Heart left ventricle (tissue), 16 donors: ENCODE measurements at regions of chr15 and their contacts with region 1.

Region 1: DNA sequence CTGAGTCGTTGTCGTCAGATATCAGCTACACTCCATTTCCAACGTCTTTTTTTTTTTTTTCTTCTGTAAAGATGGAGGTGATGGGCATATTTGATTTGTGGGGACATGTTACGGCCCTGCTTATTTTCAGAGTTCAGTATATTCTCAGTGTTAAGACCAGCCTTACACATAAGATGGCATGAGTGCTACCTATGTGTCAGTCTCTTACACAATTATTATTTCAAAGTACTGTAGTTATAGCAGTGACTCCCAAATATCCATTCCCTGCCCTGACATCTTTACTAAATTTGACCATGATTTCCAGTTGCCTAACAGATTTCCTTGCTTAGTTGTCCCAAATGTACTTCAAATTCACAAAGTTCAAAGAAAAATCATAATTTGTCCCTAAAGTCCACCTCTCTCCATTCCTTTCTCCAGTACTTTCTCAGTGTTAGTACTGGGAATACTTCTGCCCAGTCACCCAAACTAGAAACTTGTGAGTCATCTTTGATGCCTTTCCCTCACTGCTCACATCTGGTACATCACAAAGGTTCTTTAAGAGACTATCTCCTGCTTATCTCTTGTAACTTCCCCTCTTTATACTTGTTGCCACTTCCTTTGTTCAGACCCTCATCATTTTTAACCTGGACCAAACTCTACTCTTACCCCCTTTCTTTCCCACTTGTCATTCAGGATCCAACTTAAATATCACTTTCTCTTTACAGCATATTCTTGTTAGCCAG is 67.0 kb downstream of the ZNF609 start:
- DNase-seq: no peak
- ATAC-seq: peak in 1 of 4 donors; percentile 53
- H3K4me3 ChIP-seq: no peak overlapping the region
- H3K27ac ChIP-seq: no peak overlapping the region
- H3K4me1 ChIP-seq: peaks cover 0 to 17% (median 4%) of the 10 kb centered on the region in 12 donors
- H3K27me3 ChIP-seq: no peaks in the 10 kb centered on the region
- CTCF ChIP-seq: no peak
- POLR2A ChIP-seq: no peak

Region 2: DNA sequence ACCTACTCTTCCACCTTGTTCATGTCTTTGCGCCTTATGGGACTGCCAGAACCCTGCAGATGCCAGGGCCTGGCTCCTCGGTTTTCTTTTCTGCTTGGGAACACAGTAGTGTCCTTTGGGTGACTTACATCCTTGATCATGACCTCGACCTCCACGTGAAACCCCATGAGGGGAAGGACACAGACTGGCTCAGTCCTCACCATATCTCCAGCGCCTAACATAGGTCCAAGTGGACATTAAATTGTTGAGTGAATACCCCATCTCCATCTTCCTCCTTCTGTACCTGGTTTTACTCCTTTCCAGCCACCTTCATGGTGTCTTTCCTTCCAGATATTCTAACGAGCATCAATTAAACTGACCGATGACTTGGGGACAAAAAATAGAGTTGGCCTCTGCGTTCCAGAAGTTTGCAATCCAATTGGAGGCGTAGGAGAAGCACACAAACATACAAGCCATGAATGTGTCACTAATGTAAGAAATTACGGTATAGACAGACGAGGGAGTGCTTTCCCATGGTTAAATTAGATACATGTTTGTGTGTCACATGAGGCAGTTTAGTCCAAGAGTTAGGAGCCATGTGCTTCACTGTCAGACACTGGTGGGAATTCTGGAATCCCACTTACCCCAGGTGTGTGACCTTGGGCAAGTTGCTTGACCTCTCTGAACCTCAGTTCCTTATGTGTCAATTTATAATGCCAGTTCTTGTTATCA is 692.8 kb before region 1 on chr15:
- intact Hi-C with region 1: no loop called
- DNase-seq: no peak
- ATAC-seq: peak in 3 of 4 donors; percentile 8 to 27 (median 21)
- H3K4me3 ChIP-seq: peak overlapping the region; percentile 48 to 95 (median 84)
- H3K27ac ChIP-seq: peak overlapping the region; percentile 88 to 98 (median 93)
- H3K4me1 ChIP-seq: peaks cover 0 to 39% (median 28%) of the 10 kb centered on the region in 12 donors
- H3K27me3 ChIP-seq: no peaks in the 10 kb centered on the region
- CTCF ChIP-seq: no peak
- POLR2A ChIP-seq: no peak

Region 3: DNA sequence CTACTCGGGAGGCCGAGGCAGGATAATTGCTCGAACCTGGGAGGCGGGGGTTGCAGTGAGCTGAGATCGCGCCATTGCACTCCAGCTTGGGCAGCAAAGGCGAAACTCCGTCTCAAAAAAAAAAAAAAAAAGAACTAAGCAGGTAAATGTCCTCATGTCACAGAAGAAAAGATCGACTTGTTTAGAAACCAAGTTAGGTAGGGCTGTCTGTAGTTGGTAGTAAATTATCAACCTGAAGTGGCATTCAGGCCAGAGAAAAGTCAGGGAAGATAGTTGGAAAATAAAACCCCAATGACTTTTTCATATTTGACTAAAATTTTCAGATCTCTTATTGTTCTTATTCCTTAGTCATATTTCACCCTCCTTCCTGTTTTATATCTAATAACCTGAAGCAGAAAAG is 11.6 kb before region 1 on chr15:
- intact Hi-C with region 1: loop called in 1 of 10 experiments (anchors 1 kb)
- DNase-seq: no peak
- ATAC-seq: no peak
- H3K4me3 ChIP-seq: no peak overlapping the region
- H3K27ac ChIP-seq: no peak overlapping the region
- H3K4me1 ChIP-seq: peaks cover 0 to 15% (median 5%) of the 10 kb centered on the region in 12 donors
- H3K27me3 ChIP-seq: no peaks in the 10 kb centered on the region
- CTCF ChIP-seq: no peak
- POLR2A ChIP-seq: no peak

Region 4: GRCh38 chr15:64749999-64750657 is 222.7 kb after region 1 on chr15:
- intact Hi-C with region 1: no loop called
- DNase-seq: peak in 4 of 5 donors; percentile 54 to 76 (median 69)
- ATAC-seq: peak; percentile 36 to 66 (median 48)
- H3K4me3 ChIP-seq: peak overlapping the region in 6 of 12 donors; percentile 7 to 41 (median 32)
- H3K27ac ChIP-seq: peak overlapping the region; percentile 16 to 76 (median 69)
- H3K4me1 ChIP-seq: peaks cover 0 to 88% (median 36%) of the 10 kb centered on the region in 12 donors
- H3K27me3 ChIP-seq: no peaks in the 10 kb centered on the region
- CTCF ChIP-seq: peak in 3 of 12 donors; percentile 8 to 35 (median 35)
- POLR2A ChIP-seq: no peak